ENCODE measurements at regions of chr17 and their contacts with region 1.

Region 1: GRCh38 chr17:42112552-42113176 is at the start of gene DHX58:
- DNase-seq: peak; percentile 85
- H3K4me3 ChIP-seq: peak within 1 kb of the TSS; percentile 40 to 65 (median 45)
- H3K27ac ChIP-seq: peak within 1 kb of the TSS; percentile 93 to 98 (median 94)
- H3K4me1 ChIP-seq: peaks cover 17 to 24% (median 18%) of the 10 kb centered on the region in 4 donors
- H3K27me3 ChIP-seq: no peaks in the 10 kb centered on the region
- CTCF ChIP-seq: no peak
- EP300 ChIP-seq: no peak
- POLR2A ChIP-seq: peak; percentile 68
- total RNA-seq, gene DHX58: 4.6 to 14.6 (median 12.8) TPM

Region 2: GRCh38 chr17:41966463-41967140 is 146.1 kb before region 1 on chr17 and contains the start of gene CNP:
- in situ Hi-C with region 1: loop called (anchors 10 kb)
- intact Hi-C with region 1: loop called (anchors 5 kb)
- DNase-seq: peak; percentile 94
- H3K4me3 ChIP-seq: peak within 1 kb of the TSS; percentile 85 to 93 (median 90)
- H3K27ac ChIP-seq: peak within 1 kb of the TSS; percentile 91 to 96 (median 94)
- H3K4me1 ChIP-seq: peaks cover 7 to 33% (median 21%) of the 10 kb centered on the region in 4 donors
- H3K27me3 ChIP-seq: no peaks in the 10 kb centered on the region
- CTCF ChIP-seq: no peak
- EP300 ChIP-seq: no peak
- POLR2A ChIP-seq: peak; percentile 78
- total RNA-seq, gene CNP: 32.6 to 133 (median 54.2) TPM

Region 3: GRCh38 chr17:42009170-42009569 is 103.5 kb before region 1 on chr17:
- in situ Hi-C with region 1: no loop called
- intact Hi-C with region 1: no loop called
- DNase-seq: no peak
- H3K4me3 ChIP-seq: no peak overlapping the region
- H3K27ac ChIP-seq: no peak overlapping the region
- H3K4me1 ChIP-seq: peaks cover 7 to 63% (median 28%) of the 10 kb centered on the region in 4 donors
- H3K27me3 ChIP-seq: no peaks in the 10 kb centered on the region
- CTCF ChIP-seq: peak in 1 of 5 experiments; percentile 15
- EP300 ChIP-seq: no peak
- POLR2A ChIP-seq: no peak

Region 4: GRCh38 chr17:42019509-42020404 is 92.9 kb before region 1 on chr17 and contains the start of gene NKIRAS2:
- in situ Hi-C with region 1: loop called in 1 of 4 experiments (anchors 5 kb)
- intact Hi-C with region 1: no loop called
- DNase-seq: peak; percentile 96
- H3K4me3 ChIP-seq: peak within 1 kb of the TSS; percentile 85 to 97 (median 92)
- H3K27ac ChIP-seq: peak within 1 kb of the TSS; percentile 85 to 94 (median 90)
- H3K4me1 ChIP-seq: peaks cover 28 to 53% (median 43%) of the 10 kb centered on the region in 4 donors
- H3K27me3 ChIP-seq: no peaks in the 10 kb centered on the region
- CTCF ChIP-seq: peak; percentile 92 to 95 (median 95)
- EP300 ChIP-seq: no peak
- POLR2A ChIP-seq: peak; percentile 71
- total RNA-seq, gene NKIRAS2: 20.5 to 52.7 (median 35.0) TPM

Region 5: GRCh38 chr17:42027961-42028790 is 84.5 kb before region 1 on chr17:
- in situ Hi-C with region 1: loop called in 1 of 4 experiments (anchors 5 kb)
- intact Hi-C with region 1: loop called (anchors 5 kb)
- DNase-seq: no peak
- H3K4me3 ChIP-seq: no peak overlapping the region
- H3K27ac ChIP-seq: no peak overlapping the region
- H3K4me1 ChIP-seq: peaks cover 4 to 18% (median 12%) of the 10 kb centered on the region in 4 donors
- H3K27me3 ChIP-seq: no peaks in the 10 kb centered on the region
- CTCF ChIP-seq: peak in 1 of 5 experiments; percentile 4
- EP300 ChIP-seq: no peak
- POLR2A ChIP-seq: no peak

Region 6: DNA sequence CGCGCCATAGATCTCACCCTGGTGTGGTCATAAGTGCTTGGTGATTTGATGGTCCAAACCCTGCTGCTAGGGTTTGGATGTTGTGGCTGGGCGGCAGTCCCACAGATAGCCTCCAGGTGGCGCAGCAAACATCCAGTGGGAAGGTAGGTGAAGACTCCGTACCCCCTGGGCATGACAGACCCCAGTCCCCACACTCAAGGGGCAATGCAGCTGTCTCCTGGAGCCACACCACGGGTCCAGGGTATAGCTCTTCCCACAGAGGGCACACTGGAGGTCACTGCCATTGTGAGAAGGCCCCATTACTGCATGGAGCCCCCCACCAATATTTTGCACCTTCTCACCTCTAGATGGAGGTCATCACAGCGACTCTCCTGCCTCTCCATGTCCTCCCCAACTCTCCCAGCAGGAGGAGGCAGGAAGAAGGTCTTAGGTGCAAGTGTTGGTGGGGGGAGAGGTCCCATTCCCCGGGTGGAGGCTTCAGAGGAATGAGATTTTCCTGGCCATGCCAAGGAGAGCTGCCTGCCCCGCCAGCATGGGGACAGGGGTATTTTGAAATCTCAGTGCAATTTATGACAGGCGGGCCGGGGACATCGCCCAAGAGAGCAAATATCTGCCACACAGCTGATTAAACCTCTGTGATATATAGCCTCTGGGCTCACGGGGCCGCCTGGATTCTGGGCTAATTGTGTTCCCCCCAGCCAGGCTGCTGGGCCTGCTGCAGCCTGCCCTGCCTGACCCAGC is 45.1 kb before region 1 on chr17:
- in situ Hi-C with region 1: no loop called
- intact Hi-C with region 1: loop called (anchors 5 kb)
- DNase-seq: peak; percentile 77
- H3K4me3 ChIP-seq: no peak overlapping the region
- H3K27ac ChIP-seq: no peak overlapping the region
- H3K4me1 ChIP-seq: peaks cover 0 to 16% (median 12%) of the 10 kb centered on the region in 4 donors
- H3K27me3 ChIP-seq: peaks cover 21% of the 10 kb centered on the region
- CTCF ChIP-seq: peak; percentile 85 to 94 (median 92)
- EP300 ChIP-seq: no peak
- POLR2A ChIP-seq: no peak

Region 7: GRCh38 chr17:42183741-42184711 is 71.4 kb after region 1 on chr17:
- in situ Hi-C with region 1: no loop called
- intact Hi-C with region 1: no loop called
- DNase-seq: peak; percentile 83
- H3K4me3 ChIP-seq: peak overlapping the region; percentile 25 to 59 (median 41)
- H3K27ac ChIP-seq: peak overlapping the region; percentile 81 to 86 (median 84)
- H3K4me1 ChIP-seq: peaks cover 12 to 36% (median 30%) of the 10 kb centered on the region in 4 donors
- H3K27me3 ChIP-seq: peaks cover 31% of the 10 kb centered on the region
- CTCF ChIP-seq: peak; percentile 53 to 87 (median 81)
- EP300 ChIP-seq: no peak
- POLR2A ChIP-seq: peak; percentile 68

Region 8: GRCh38 chr17:42243493-42243996 is 130.9 kb after region 1 on chr17:
- in situ Hi-C with region 1: no loop called
- intact Hi-C with region 1: no loop called
- DNase-seq: no peak
- H3K4me3 ChIP-seq: no peak overlapping the region
- H3K27ac ChIP-seq: no peak overlapping the region
- H3K4me1 ChIP-seq: peaks cover 0 to 28% (median 3%) of the 10 kb centered on the region in 4 donors
- H3K27me3 ChIP-seq: no peaks in the 10 kb centered on the region
- CTCF ChIP-seq: no peak
- EP300 ChIP-seq: no peak
- POLR2A ChIP-seq: no peak